ENCODE measurements at regions of chr12 and their contacts with region 1.

Region 1: DNA sequence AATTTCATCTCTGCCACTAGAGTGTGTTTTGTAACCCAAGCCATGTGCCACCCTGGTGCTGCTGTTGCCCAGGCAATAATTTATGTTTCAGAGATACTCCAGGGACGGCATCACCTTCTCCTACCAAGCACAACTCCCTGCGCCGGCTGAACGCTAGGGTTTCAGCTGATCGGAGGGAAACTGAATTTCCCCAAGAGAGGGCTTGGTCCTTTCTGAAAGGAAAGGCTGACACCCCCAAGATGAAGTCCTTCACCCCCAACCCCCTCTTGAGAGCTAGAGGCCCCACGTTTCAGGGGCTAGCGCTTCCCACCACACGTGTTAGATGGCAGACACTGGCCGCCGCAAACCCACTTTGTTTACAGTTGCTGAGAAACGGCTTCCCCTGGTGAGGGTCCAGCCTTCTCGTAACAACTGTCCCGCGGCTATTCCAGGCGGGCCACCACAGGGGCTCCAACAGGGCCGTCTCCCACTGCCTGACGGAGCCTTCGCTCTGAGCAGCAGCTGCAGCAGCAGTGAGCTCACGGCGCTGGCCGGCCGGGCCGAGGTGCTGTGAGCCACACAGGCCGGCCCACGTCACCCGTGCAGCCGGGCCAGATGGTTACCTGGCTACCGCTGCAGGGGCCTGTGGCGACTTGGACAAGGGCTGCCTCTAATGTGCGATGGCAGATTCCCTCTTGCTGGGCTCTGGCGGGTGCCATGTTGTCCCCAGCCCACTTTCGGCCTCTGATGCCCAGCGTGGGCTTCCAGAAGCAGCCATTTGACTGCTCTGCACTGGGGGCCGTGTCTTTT is 66.4 kb downstream of the TESC start:
- DNase-seq: peak in 1 of 3 donors; percentile 63
- ATAC-seq: peak; percentile 64 to 67
- H3K4me3 ChIP-seq: no peak overlapping the region
- H3K27ac ChIP-seq: no peak overlapping the region
- H3K4me1 ChIP-seq: peaks cover 1% of the 10 kb centered on the region
- H3K27me3 ChIP-seq: no peaks in the 10 kb centered on the region

Region 2: GRCh38 chr12:117098361-117099217 is 65.8 kb after region 1 on chr12:
- intact Hi-C with region 1: loop called in 1 of 4 experiments (anchors 10 kb)
- DNase-seq: no peak
- ATAC-seq: peak; percentile 30 to 33
- H3K4me3 ChIP-seq: peak overlapping the region; percentile 68
- H3K27ac ChIP-seq: no peak overlapping the region
- H3K4me1 ChIP-seq: peaks cover 2% of the 10 kb centered on the region
- H3K27me3 ChIP-seq: no peaks in the 10 kb centered on the region

Region 3: DNA sequence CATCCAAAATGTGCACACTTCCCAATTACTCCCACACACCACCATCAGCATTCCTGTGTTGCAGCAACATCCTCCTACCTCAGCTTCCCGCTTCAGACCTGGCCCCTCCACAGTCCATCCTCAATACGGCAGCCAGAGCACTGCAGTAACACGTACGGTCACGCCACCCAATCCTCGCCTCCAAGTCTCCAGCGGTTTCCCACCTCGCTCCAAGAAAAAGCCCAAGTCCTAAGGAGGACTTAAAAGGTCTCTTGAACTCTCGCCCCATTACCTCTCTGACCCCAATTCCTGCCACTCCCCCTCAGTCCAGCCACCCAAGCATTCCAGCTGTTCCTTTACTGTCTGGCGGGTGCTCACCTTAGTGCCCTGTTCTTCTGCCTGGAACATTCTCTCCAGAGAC is 145.5 kb after region 1 on chr12:
- intact Hi-C with region 1: no loop called
- DNase-seq: no peak
- ATAC-seq: no peak
- H3K4me3 ChIP-seq: no peak overlapping the region
- H3K27ac ChIP-seq: no peak overlapping the region
- H3K4me1 ChIP-seq: no peaks in the 10 kb centered on the region
- H3K27me3 ChIP-seq: no peaks in the 10 kb centered on the region

Measured in right cardiac atrium (tissue), 5 donors.